Endothelial cell of umbilical vein (primary cell): ENCODE measurements at regions of chr2 and their contacts with region 1.

Region 1: DNA sequence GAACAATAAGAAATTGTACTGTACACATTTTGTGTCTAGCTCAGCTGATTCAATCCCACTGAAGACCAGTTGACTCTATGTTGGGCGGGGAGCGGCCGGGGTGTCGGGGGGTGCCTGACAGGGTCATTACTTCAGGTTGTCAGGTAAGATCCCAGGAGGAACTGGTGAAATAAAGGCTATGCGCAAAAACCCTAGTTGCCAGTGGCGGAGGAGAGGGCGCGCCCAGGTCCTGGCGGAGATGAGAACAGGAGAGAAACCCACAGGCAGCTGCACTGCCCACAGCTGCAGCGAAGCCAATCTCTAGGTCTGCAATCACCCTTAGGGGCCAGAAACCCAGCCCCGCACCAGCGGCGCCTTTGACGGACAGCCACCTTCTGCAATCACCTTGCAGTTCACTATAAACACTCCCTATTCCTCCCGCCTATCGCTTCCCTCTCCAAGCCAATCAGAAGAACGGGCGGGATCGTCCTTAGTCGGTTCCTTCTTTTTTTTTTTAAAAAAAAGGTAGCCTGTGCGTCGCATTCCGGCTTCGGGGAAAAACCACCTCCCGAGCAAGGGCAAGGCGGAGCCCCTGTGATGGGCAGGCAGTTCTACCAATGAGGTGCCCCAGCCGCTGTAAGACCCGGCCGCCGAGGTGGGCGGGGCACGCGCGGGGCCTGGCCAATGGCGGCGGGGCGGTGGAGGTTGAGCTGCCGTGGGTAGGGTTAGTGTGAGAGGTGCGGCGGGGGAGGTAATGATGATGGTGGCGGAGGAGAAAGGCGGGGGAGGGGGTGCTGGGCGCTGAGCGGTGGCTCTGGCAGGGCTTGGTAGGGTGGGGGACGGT is at the start of gene EHBP1:
- DNase-seq: peak; percentile 100
- H3K4me3 ChIP-seq: peak within 1 kb of the TSS; percentile 84 to 87 (median 85)
- H3K27ac ChIP-seq: peak within 1 kb of the TSS; percentile 29
- H3K4me1 ChIP-seq: peaks cover 17% of the 10 kb centered on the region
- H3K27me3 ChIP-seq: no peaks in the 10 kb centered on the region
- CTCF ChIP-seq: no peak
- POLR2A ChIP-seq: peak; percentile 69
- total RNA-seq, gene EHBP1: 31.6 and 34.8 TPM in 2 replicates

Region 2: GRCh38 chr2:62306751-62307468 is 398.3 kb before region 1 on chr2:
- CTCF ChIA-PET with region 1: no interaction called
- POLR2A ChIA-PET with region 1: no interaction called
- dilution Hi-C with region 1: no loop called
- intact Hi-C with region 1: loop called (anchors 10 kb)
- DNase-seq: peak; percentile 89
- H3K4me3 ChIP-seq: no peak overlapping the region
- H3K27ac ChIP-seq: peak overlapping the region; percentile 82
- H3K4me1 ChIP-seq: peaks cover 47% of the 10 kb centered on the region
- H3K27me3 ChIP-seq: no peaks in the 10 kb centered on the region
- CTCF ChIP-seq: no peak
- POLR2A ChIP-seq: no peak

Region 3: DNA sequence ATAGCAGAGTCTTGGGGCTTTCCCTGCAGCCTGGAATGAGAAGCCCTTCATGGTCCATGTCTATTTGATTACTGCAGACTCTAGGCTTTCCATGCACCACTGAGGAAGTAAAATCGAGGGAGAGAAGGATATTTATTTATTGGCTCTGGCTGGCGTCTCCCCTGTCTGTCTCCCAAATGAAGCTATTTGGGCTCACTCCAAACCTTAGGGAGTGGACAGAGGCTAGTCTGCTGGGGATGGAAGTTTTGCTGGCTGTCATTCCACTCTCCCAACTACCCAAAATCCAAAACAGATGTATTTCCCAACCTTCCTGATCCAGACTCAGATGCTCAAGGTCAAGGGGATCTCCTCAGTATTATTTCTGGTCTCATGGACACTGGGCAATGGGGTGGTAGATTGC is 232.9 kb before region 1 on chr2:
- CTCF ChIA-PET with region 1: no interaction called
- POLR2A ChIA-PET with region 1: no interaction called
- dilution Hi-C with region 1: no loop called
- intact Hi-C with region 1: no loop called
- DNase-seq: no peak
- H3K4me3 ChIP-seq: no peak overlapping the region
- H3K27ac ChIP-seq: no peak overlapping the region
- H3K4me1 ChIP-seq: peaks cover 16% of the 10 kb centered on the region
- H3K27me3 ChIP-seq: no peaks in the 10 kb centered on the region
- CTCF ChIP-seq: no peak
- POLR2A ChIP-seq: no peak

Region 4: DNA sequence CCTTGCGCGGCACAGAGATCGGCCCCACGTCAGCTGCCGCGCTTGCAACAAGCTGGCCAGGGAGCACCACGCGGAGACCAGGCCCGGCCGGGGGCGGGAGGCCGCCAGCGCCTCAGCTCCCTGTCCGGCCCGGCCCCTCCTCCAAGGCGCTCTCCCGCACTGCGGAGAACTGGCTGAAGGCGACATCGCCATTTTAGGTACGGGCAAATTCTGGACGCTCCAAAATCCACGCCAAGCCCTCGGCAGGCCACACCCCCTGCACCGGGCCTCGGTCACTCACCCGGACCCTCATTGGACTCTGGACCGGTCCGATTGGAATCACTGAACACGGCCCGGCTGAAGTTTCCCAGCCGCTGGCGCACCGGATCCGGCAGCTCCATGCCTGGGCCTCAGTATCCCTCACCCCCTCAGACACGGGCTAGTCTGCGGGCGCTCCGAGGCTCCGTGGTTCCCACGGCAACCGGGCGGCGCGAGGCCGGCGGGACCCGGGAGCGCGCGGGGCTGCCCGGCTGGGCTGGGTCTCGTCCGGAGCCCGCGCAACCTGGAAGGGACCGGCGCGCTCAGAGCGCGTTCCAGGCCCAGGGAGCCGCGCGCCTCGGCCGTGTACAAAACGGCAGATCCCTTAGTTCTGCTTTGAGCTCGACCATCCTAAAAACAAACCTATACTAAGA is 199.3 kb before region 1 on chr2 and contains the start of gene TMEM17:
- CTCF ChIA-PET with region 1: no interaction called
- POLR2A ChIA-PET with region 1: interaction called, 8 read pairs
- dilution Hi-C with region 1: no loop called
- intact Hi-C with region 1: loop called (anchors 1 kb)
- DNase-seq: peak; percentile 90
- H3K4me3 ChIP-seq: peak within 1 kb of the TSS; percentile 60 to 97 (median 96)
- H3K27ac ChIP-seq: peak within 1 kb of the TSS; percentile 84
- H3K4me1 ChIP-seq: peaks cover 7% of the 10 kb centered on the region
- H3K27me3 ChIP-seq: no peaks in the 10 kb centered on the region
- CTCF ChIP-seq: no peak
- POLR2A ChIP-seq: no peak
- total RNA-seq, gene TMEM17: 0.91 and 1.2 TPM in 2 replicates

Region 5: GRCh38 chr2:62687628-62688027 is 17.6 kb before region 1 on chr2:
- CTCF ChIA-PET with region 1: no interaction called
- POLR2A ChIA-PET with region 1: no interaction called
- dilution Hi-C with region 1: no loop called
- intact Hi-C with region 1: no loop called
- DNase-seq: no peak
- H3K4me3 ChIP-seq: no peak overlapping the region
- H3K27ac ChIP-seq: no peak overlapping the region
- H3K4me1 ChIP-seq: no peaks in the 10 kb centered on the region
- H3K27me3 ChIP-seq: peaks cover 8 to 11% of the 10 kb centered on the region in 2 experiments
- CTCF ChIP-seq: no peak
- POLR2A ChIP-seq: no peak

Region 6: DNA sequence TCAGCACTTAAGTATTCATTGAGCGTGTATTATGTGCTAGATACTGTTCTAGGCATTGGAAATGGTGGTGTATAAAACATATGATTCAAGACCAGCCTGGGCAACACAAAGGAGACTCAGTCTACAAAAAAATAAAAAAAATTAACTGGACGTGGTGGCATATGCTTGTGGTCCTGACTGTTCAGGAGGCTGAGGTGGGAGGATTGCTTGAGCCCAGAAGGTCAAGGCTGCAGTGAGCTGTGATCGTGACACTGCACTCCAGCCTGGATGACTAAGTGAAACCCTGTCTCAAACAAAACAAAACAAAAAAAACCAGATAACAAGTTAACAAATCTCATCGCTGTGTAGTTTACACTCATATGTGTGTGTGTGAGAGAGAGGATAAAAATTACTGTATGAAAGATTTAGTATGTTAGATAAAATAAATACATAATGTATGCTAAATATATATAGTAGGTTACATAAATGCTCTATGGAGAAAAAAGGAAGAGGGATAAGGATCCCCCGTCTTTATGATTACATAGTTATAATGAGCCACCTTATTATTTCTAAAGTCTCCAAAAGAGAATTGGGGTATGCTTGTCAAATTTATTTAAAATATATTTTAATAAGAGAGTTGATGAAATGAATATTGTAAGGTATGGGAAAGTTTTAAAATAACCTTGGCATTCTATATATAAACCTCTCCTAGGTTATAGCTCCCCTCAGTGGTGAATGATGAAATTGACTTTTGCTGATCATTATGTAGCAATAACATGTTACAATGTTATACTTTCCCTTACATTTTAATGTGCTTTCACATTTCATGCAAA is 69.5 kb after region 1 on chr2:
- CTCF ChIA-PET with region 1: interaction called, 6 read pairs
- POLR2A ChIA-PET with region 1: no interaction called
- dilution Hi-C with region 1: no loop called
- intact Hi-C with region 1: loop called (anchors 1 kb)
- DNase-seq: peak; percentile 62
- H3K4me3 ChIP-seq: no peak overlapping the region
- H3K27ac ChIP-seq: no peak overlapping the region
- H3K4me1 ChIP-seq: no peaks in the 10 kb centered on the region
- H3K27me3 ChIP-seq: no peaks in the 10 kb centered on the region
- CTCF ChIP-seq: peak; percentile 38 to 41
- POLR2A ChIP-seq: no peak

Region 7: DNA sequence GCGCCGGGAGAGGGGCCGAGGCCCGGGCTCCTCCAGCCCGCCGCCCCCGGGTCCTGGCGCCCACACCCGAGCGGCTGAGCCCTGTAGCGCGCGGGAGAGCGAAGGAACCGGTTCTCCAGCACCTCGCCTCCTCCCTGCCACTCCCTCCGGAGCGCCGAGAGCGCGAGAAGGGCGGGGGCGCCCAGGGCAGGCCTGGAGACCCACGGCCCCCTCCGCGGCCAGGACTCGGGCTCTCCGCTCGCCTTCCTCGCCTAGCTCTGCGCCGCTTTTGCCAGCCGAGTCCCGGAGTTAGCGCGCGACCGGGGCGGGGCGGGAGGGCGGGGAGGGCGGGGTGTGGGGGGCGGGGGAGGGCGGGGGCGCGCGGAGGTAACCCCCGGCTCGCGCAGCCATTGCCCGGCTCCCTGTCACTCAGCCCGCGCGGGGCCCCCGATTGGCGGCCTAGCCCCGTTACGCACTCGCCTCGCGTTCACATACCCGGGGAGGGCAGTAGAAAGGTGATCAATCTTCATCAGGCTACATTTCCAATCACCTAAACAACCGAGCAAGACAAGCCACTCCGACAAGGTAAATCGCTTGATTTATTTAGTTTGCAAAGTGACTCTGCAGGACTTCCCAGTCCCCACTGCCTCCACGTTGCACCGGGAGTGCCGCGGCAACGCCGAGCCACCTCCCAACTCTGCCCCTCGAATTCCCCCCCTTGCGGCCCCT is 345.3 kb after region 1 on chr2 and contains the start of gene OTX1:
- CTCF ChIA-PET with region 1: no interaction called
- POLR2A ChIA-PET with region 1: no interaction called
- dilution Hi-C with region 1: no loop called
- intact Hi-C with region 1: loop called (anchors 10 kb)
- DNase-seq: peak; percentile 39
- H3K4me3 ChIP-seq: peak within 1 kb of the TSS; percentile 8 to 42 (median 41)
- H3K27ac ChIP-seq: no peak within 1 kb of the TSS
- H3K4me1 ChIP-seq: peaks cover 25% of the 10 kb centered on the region
- H3K27me3 ChIP-seq: peaks cover 71 to 76% of the 10 kb centered on the region in 2 experiments
- CTCF ChIP-seq: no peak
- POLR2A ChIP-seq: no peak
- total RNA-seq, gene OTX1: 0.30 TPM in 1 of 2 replicates, not detected in the other